A549 (cell line): ENCODE measurements at regions of chr7 and their contacts with region 1.

Region 1: GRCh38 chr7:32164346-32164957 is 94.2 kb upstream of the PDE1C start:
- DNase-seq: peak; percentile 53 to 75
- ATAC-seq: peak; percentile 73 to 84; a peak in 5 of 6 replicates
- H3K4me3 ChIP-seq: no peak overlapping the region
- H3K27ac ChIP-seq: peak overlapping the region; percentile 74 to 85; a peak in 4 of 6 replicates
- H3K4me1 ChIP-seq: peaks cover 30% of the 10 kb centered on the region
- CTCF ChIP-seq: peak; percentile 71
- EP300 ChIP-seq: no peak
- POLR2A ChIP-seq: no peak
- RAD21 ChIP-seq: peak; percentile 74 to 78

Region 2: DNA sequence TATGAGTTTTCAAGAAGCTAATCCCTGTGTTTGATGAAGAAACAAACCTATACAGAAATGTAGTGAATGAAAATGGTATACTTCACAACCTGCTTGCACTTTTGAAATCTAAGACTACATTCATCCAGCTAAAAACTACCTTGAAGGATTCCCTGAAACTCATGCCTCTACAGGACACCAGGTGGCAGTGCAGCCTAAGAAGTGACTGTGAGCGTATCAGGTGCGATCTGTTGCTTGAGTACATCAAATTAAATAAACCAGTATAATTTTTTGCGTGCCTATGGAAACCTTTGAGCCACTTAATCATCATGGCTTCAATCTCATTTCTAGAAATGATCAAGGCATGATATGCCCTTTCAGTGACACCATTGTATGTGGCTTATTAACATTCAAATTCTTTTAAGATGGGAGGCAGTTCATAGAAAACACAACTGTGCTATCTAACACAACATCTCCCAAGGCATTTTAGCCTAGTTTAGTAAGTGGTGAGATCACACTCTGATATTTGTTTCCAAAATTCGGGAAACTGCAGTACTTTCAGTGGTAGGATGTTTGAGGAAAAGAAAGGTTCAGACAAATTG is 420.1 kb before region 1 on chr7:
- CTCF ChIA-PET with region 1: interaction called, 18 read pairs
- POLR2A ChIA-PET with region 1: no interaction called
- DNase-seq: peak; percentile 44 to 82
- ATAC-seq: peak; percentile 77 to 93; a peak in 4 of 6 replicates
- H3K4me3 ChIP-seq: no peak overlapping the region
- H3K27ac ChIP-seq: peak overlapping the region in 1 of 2 experiments; percentile 11; a peak in 1 of 6 replicates
- H3K4me1 ChIP-seq: peaks cover 22% of the 10 kb centered on the region
- CTCF ChIP-seq: peak; percentile 96
- EP300 ChIP-seq: no peak
- POLR2A ChIP-seq: no peak
- RAD21 ChIP-seq: peak; percentile 99

Region 3: DNA sequence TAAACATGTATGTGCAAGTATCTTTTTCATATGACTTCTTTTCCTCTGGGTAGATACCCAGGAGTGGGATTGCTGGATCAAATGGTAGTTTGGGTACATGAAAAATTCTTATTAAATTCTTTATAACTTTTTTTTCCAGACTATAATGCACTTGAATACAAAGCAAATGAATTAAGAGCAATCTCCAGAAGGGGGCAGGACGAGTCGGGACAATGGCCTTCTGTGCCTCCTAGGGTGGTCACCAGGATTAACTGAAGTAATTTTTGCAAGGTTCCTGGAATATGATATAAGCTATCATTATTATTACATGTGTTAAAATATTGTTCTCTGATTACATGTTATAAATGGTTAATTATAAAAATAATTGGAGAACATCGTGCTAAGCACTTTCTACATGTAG is 350.3 kb before region 1 on chr7:
- CTCF ChIA-PET with region 1: interaction called, 11 read pairs
- POLR2A ChIA-PET with region 1: no interaction called
- DNase-seq: peak; percentile 4 to 53
- ATAC-seq: peak in 1 of 2 experiments; percentile 63; a peak in 2 of 6 replicates
- H3K4me3 ChIP-seq: no peak overlapping the region
- H3K27ac ChIP-seq: no peak overlapping the region
- H3K4me1 ChIP-seq: peaks cover 12% of the 10 kb centered on the region
- CTCF ChIP-seq: peak; percentile 48
- EP300 ChIP-seq: no peak
- POLR2A ChIP-seq: no peak
- RAD21 ChIP-seq: peak; percentile 64 to 69

Region 4: GRCh38 chr7:32179567-32179966 is 15.1 kb after region 1 on chr7:
- CTCF ChIA-PET with region 1: interaction called, 10 read pairs
- POLR2A ChIA-PET with region 1: no interaction called
- DNase-seq: no peak
- ATAC-seq: no peak
- H3K4me3 ChIP-seq: no peak overlapping the region
- H3K27ac ChIP-seq: no peak overlapping the region
- H3K4me1 ChIP-seq: no peaks in the 10 kb centered on the region
- CTCF ChIP-seq: no peak
- EP300 ChIP-seq: no peak
- POLR2A ChIP-seq: no peak
- RAD21 ChIP-seq: no peak

Region 5: GRCh38 chr7:32539919-32540531 is 375.6 kb after region 1 on chr7:
- CTCF ChIA-PET with region 1: no interaction called
- POLR2A ChIA-PET with region 1: no interaction called
- DNase-seq: no peak
- ATAC-seq: peak in 1 of 2 experiments; percentile 29; a peak in 2 of 6 replicates
- H3K4me3 ChIP-seq: no peak overlapping the region
- H3K27ac ChIP-seq: peak overlapping the region in 1 of 2 experiments; percentile 48; a peak in 3 of 6 replicates
- H3K4me1 ChIP-seq: peaks cover 30% of the 10 kb centered on the region
- CTCF ChIP-seq: no peak
- EP300 ChIP-seq: no peak
- POLR2A ChIP-seq: no peak
- RAD21 ChIP-seq: no peak